Activated CD4-positive, alpha-beta T cell treated with anti-CD3 and anti-CD28 coated beads for 36 hours (primary cell): ENCODE measurements at regions of chr14 and their contacts with region 1.

Region 1: GRCh38 chr14:104078031-104078455 is 7.5 kb upstream of the ASPG start:
- DNase-seq: peak; percentile 92
- ATAC-seq: peak; percentile 98
- H3K4me3 Mint-ChIP-seq: no peak overlapping the region
- H3K27ac Mint-ChIP-seq: peak overlapping the region; percentile 47
- H3K4me1 Mint-ChIP-seq: peaks cover 15% of the 10 kb centered on the region
- H3K27me3 Mint-ChIP-seq: peaks cover 6% of the 10 kb centered on the region

Region 2: GRCh38 chr14:104094709-104095438 is 16.8 kb after region 1 on chr14:
- CTCF ChIA-PET with region 1: interaction called, 16 read pairs
- POLR2A ChIA-PET with region 1: no interaction called
- intact Hi-C with region 1: loop called in 1 of 2 experiments (anchors 1 kb)
- DNase-seq: peak; percentile 89
- ATAC-seq: peak; percentile 91
- H3K4me3 Mint-ChIP-seq: no peak overlapping the region
- H3K27ac Mint-ChIP-seq: no peak overlapping the region
- H3K4me1 Mint-ChIP-seq: peaks cover 5% of the 10 kb centered on the region
- H3K27me3 Mint-ChIP-seq: no peaks in the 10 kb centered on the region

Region 3: GRCh38 chr14:104116756-104117255 is 38.8 kb after region 1 on chr14:
- CTCF ChIA-PET with region 1: no interaction called
- POLR2A ChIA-PET with region 1: no interaction called
- intact Hi-C with region 1: no loop called
- DNase-seq: peak; percentile 45
- ATAC-seq: peak; percentile 53
- H3K4me3 Mint-ChIP-seq: no peak overlapping the region
- H3K27ac Mint-ChIP-seq: no peak overlapping the region
- H3K4me1 Mint-ChIP-seq: no peaks in the 10 kb centered on the region
- H3K27me3 Mint-ChIP-seq: peaks cover 25% of the 10 kb centered on the region

Region 4: GRCh38 chr14:104130974-104131651 is 53.1 kb after region 1 on chr14:
- CTCF ChIA-PET with region 1: interaction called, 11 read pairs
- POLR2A ChIA-PET with region 1: no interaction called
- intact Hi-C with region 1: loop called (anchors 1 kb)
- DNase-seq: peak; percentile 41
- ATAC-seq: no peak
- H3K4me3 Mint-ChIP-seq: no peak overlapping the region
- H3K27ac Mint-ChIP-seq: no peak overlapping the region
- H3K4me1 Mint-ChIP-seq: no peaks in the 10 kb centered on the region
- H3K27me3 Mint-ChIP-seq: peaks cover 37% of the 10 kb centered on the region

Region 5: DNA sequence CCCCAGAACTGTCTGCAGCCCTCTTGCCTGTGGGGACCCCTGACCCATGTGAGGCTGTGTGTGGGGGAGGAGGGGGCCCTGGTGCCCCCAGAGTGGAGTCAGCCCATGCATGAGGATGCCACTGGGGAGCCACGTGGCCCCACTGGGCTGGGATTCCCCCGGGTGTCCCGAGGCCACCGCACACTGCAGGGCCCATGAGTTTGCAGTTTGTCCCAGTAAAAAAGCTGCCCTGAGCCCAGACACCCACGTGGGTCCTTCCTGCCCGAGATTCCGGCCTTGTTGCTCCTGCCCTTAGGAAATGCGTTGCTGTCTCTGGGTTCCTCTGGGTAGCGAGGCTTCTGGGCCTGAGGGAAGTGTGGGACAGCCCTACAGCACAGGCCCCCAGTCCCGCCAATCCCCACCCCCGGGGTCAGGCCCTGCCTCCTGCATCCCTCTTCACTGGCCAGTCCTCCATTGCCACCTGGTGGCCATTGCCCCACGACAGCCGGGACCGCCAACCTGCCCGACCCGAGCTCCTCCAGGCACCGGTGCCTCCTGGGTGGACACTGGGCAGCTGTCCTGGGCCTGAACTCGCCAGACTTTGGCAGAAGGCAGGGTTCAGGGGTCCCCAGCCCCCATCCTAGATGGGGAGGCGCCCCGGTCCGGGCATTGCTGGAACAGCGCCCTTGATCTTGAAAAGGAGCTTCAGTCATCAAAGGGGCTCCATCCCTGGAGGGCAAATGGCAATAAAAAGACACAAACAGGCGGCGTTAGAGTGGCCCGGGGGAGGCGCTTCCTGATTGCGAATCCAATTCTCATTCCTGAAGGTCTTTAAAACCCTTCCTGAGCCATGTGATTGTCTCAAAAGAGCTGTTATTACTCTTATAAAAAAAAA is 485.9 kb after region 1 on chr14:
- CTCF ChIA-PET with region 1: interaction called, 8 read pairs
- POLR2A ChIA-PET with region 1: no interaction called
- intact Hi-C with region 1: loop called in 1 of 2 experiments (anchors 1 kb)
- DNase-seq: peak; percentile 82
- ATAC-seq: peak; percentile 60
- H3K4me3 Mint-ChIP-seq: no peak overlapping the region
- H3K27ac Mint-ChIP-seq: no peak overlapping the region
- H3K4me1 Mint-ChIP-seq: no peaks in the 10 kb centered on the region
- H3K27me3 Mint-ChIP-seq: peaks cover 7% of the 10 kb centered on the region

Region 6: GRCh38 chr14:104639889-104640548 is 562.0 kb after region 1 on chr14:
- CTCF ChIA-PET with region 1: no interaction called
- POLR2A ChIA-PET with region 1: no interaction called
- intact Hi-C with region 1: loop called in 1 of 2 experiments (anchors 1 kb)
- DNase-seq: peak; percentile 76
- ATAC-seq: peak; percentile 93
- H3K4me3 Mint-ChIP-seq: no peak overlapping the region
- H3K27ac Mint-ChIP-seq: no peak overlapping the region
- H3K4me1 Mint-ChIP-seq: peaks cover 5% of the 10 kb centered on the region
- H3K27me3 Mint-ChIP-seq: peaks cover 8% of the 10 kb centered on the region